ENCODE measurements at regions of chr22 and their contacts with region 1.

Region 1: DNA sequence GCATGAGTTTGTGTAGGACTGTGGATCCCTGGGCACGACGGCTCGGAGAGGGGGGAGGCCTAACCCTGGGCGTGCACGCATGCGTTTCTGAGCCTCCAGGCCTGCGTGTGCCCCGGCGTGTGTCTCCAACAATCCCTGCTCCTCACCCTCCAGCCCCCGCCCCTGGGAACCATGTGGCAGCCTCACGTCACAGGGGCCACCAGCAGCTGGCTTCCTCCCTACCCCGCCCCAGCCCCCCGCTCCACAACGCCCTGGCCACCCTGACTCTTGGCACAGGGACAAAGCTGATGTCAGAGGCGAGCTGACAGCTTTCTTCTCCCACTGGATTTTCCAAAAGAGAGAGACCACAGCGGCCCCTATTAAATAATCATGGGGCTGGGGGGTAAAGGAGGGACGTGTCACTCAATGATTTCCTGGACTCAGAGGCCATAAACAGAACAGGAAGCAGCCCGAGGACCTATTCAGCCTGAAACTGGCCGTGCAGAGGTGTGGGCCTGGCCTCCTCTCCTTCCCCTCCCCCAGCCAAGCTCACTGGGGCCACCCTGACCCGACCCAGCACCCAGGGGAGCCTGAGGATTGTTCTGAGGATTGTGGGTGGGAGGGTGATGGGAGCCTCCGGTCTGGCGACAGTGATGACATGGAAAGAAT is 6.8 kb upstream of the LIF start:
- DNase-seq: no peak
- H3K4me3 ChIP-seq: no peak overlapping the region
- H3K4me3 Mint-ChIP-seq: no peak overlapping the region
- H3K27ac Mint-ChIP-seq: no peak overlapping the region
- H3K4me1 ChIP-seq: peaks cover 33% of the 10 kb centered on the region
- H3K4me1 Mint-ChIP-seq: peaks cover 26% of the 10 kb centered on the region
- H3K27me3 ChIP-seq: no peaks in the 10 kb centered on the region
- H3K27me3 Mint-ChIP-seq: no peaks in the 10 kb centered on the region
- CTCF ChIP-seq: no peak

Region 2: GRCh38 chr22:30104501-30105156 is 148.7 kb before region 1 on chr22:
- CTCF ChIA-PET with region 1: interaction called, 4 read pairs
- POLR2A ChIA-PET with region 1: no interaction called
- intact Hi-C with region 1: loop called (anchors 1 kb)
- DNase-seq: no peak
- H3K4me3 ChIP-seq: no peak overlapping the region
- H3K4me3 Mint-ChIP-seq: no peak overlapping the region
- H3K27ac Mint-ChIP-seq: no peak overlapping the region
- H3K4me1 ChIP-seq: no peaks in the 10 kb centered on the region
- H3K4me1 Mint-ChIP-seq: peaks cover 11% of the 10 kb centered on the region
- H3K27me3 ChIP-seq: no peaks in the 10 kb centered on the region
- H3K27me3 Mint-ChIP-seq: no peaks in the 10 kb centered on the region
- CTCF ChIP-seq: no peak

Region 3: GRCh38 chr22:30187529-30188407 is 65.6 kb before region 1 on chr22:
- CTCF ChIA-PET with region 1: no interaction called
- POLR2A ChIA-PET with region 1: no interaction called
- intact Hi-C with region 1: no loop called
- DNase-seq: no peak
- H3K4me3 ChIP-seq: no peak overlapping the region
- H3K4me3 Mint-ChIP-seq: no peak overlapping the region
- H3K27ac Mint-ChIP-seq: no peak overlapping the region
- H3K4me1 ChIP-seq: peaks cover 11% of the 10 kb centered on the region
- H3K4me1 Mint-ChIP-seq: peaks cover 16% of the 10 kb centered on the region
- H3K27me3 ChIP-seq: no peaks in the 10 kb centered on the region
- H3K27me3 Mint-ChIP-seq: no peaks in the 10 kb centered on the region
- CTCF ChIP-seq: no peak

Measured in Caco-2 (cell line).